PC-9 (cell line): ENCODE measurements at regions of chr10 and their contacts with region 1.

Region 1: GRCh38 chr10:27542812-27543211 is 38.7 kb downstream of the RAB18 start:
- DNase-seq: no peak
- H3K4me3 ChIP-seq: no peak overlapping the region
- H3K27ac ChIP-seq: no peak overlapping the region
- H3K4me1 ChIP-seq: no peaks in the 10 kb centered on the region
- H3K27me3 ChIP-seq: no peaks in the 10 kb centered on the region
- CTCF ChIP-seq: no peak

Region 2: DNA sequence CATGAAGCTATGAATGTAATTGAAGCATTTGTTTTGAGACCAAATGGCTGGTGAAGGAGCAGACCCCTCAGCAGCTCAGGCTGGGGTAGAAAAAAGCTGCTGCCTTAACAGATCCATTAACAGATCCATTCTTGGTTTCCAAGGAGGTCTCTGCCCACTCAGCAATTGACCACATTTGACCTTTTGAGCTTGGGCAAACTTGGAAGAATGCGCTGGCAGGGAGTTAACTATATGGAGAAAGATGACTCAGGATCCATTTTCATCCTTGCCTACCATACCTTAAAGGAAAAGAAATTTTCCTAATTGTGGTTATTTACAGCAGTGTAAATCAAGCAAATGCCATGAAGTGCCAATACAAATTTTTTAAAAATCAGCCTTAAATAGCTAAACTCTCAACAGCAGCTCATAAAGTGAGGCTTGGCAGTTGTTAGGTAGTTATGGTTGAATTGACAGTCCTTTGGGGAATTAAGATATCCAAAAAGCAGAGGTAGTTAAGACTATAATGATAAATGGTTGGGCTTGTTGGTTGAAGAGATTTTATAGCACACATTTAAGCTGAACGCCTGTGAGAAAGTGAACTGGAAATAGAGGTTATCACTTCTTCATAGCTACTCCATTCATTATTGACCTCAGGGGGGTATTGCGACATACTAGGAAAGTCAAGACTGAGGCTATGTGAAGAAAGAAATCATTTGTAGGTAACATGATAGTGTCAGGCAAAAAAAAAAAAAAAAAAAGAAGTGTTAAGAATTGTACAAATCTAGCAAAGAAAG is 118.9 kb after region 1 on chr10:
- CTCF ChIA-PET with region 1: interaction called, 18 read pairs
- POLR2A ChIA-PET with region 1: no interaction called
- intact Hi-C with region 1: no loop called
- DNase-seq: no peak
- H3K4me3 ChIP-seq: no peak overlapping the region
- H3K27ac ChIP-seq: no peak overlapping the region
- H3K4me1 ChIP-seq: no peaks in the 10 kb centered on the region
- H3K27me3 ChIP-seq: peaks cover 15% of the 10 kb centered on the region
- CTCF ChIP-seq: no peak

Region 3: GRCh38 chr10:28520346-28520745 is 977.5 kb after region 1 on chr10:
- CTCF ChIA-PET with region 1: no interaction called
- POLR2A ChIA-PET with region 1: interaction called, 15 read pairs
- intact Hi-C with region 1: no loop called
- DNase-seq: no peak
- H3K4me3 ChIP-seq: no peak overlapping the region
- H3K27ac ChIP-seq: no peak overlapping the region
- H3K4me1 ChIP-seq: no peaks in the 10 kb centered on the region
- H3K27me3 ChIP-seq: no peaks in the 10 kb centered on the region
- CTCF ChIP-seq: no peak